ENCODE measurements at regions of chr18 and their contacts with region 1.

Region 1: GRCh38 chr18:23503038-23503962 is at the start of gene RMC1:
- DNase-seq: peak; percentile 94 to 98
- H3K4me3 ChIP-seq: peak within 1 kb of the TSS; percentile 65 to 93
- H3K27ac ChIP-seq: peak within 1 kb of the TSS; percentile 95
- H3K4me1 ChIP-seq: peaks cover 39% of the 10 kb centered on the region
- H3K27me3 ChIP-seq: no peaks in the 10 kb centered on the region
- CTCF ChIP-seq: no peak
- POLR2A ChIP-seq: peak in 1 of 2 donors; percentile 49
- total RNA-seq, gene RMC1: 17.7 TPM

Region 2: DNA sequence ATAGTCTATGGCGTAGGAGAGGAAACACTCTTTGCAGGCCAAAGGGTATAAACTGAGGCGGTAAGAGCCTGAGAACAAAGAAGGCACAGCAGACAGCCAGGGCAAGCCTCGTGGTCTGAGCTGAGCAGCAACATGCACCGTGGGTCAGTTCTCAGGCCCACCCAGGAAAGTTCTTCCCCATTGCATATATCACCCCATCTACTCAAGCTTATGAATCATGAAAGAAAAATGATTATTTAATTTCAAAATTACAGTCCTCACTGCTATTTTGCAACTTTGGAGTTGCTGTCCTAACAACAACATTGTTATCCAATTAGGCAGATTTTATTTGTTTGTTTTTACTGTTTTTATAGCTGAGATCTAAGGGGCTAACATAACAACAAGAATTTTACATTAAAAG is 104.9 kb before region 1 on chr18:
- intact Hi-C with region 1: no loop called
- DNase-seq: no peak
- H3K4me3 ChIP-seq: no peak overlapping the region
- H3K27ac ChIP-seq: no peak overlapping the region
- H3K4me1 ChIP-seq: peaks cover 12% of the 10 kb centered on the region
- H3K27me3 ChIP-seq: no peaks in the 10 kb centered on the region
- CTCF ChIP-seq: no peak
- POLR2A ChIP-seq: no peak

Region 3: GRCh38 chr18:23586249-23587196 is 83.2 kb after region 1 on chr18 and contains the start of gene NPC1:
- intact Hi-C with region 1: loop called (anchors 5 kb)
- DNase-seq: peak in 1 of 2 donors; percentile 96
- H3K4me3 ChIP-seq: peak within 1 kb of the TSS; percentile 85 to 92
- H3K27ac ChIP-seq: peak within 1 kb of the TSS; percentile 99
- H3K4me1 ChIP-seq: peaks cover 42% of the 10 kb centered on the region
- H3K27me3 ChIP-seq: no peaks in the 10 kb centered on the region
- CTCF ChIP-seq: peak; percentile 66 to 92 (median 75)
- POLR2A ChIP-seq: peak; percentile 3 to 80
- total RNA-seq, gene NPC1: 89.9 TPM

Region 4: GRCh38 chr18:24014062-24014985 is 511.0 kb after region 1 on chr18 and contains the start of gene TTC39C:
- intact Hi-C with region 1: no loop called
- DNase-seq: no peak
- H3K4me3 ChIP-seq: peak within 1 kb of the TSS; percentile 75 to 85
- H3K27ac ChIP-seq: peak within 1 kb of the TSS; percentile 92
- H3K4me1 ChIP-seq: peaks cover 27% of the 10 kb centered on the region
- H3K27me3 ChIP-seq: no peaks in the 10 kb centered on the region
- CTCF ChIP-seq: no peak
- POLR2A ChIP-seq: peak in 1 of 2 donors; percentile 6
- total RNA-seq, gene TTC39C: 42.5 TPM